B cell (primary cell): ENCODE measurements at regions of chr3 and their contacts with region 1.

Region 1: GRCh38 chr3:39166134-39166731 is 12.8 kb upstream of the CSRNP1 start:
- DNase-seq: peak; percentile 26
- ATAC-seq: peak; percentile 54
- H3K4me3 ChIP-seq: no peak overlapping the region
- H3K4me3 Mint-ChIP-seq: no peak overlapping the region
- H3K27ac ChIP-seq: no peak overlapping the region
- H3K27ac Mint-ChIP-seq: no peak overlapping the region
- H3K4me1 ChIP-seq: no peaks in the 10 kb centered on the region
- H3K4me1 Mint-ChIP-seq: no peaks in the 10 kb centered on the region
- H3K27me3 ChIP-seq: no peaks in the 10 kb centered on the region
- H3K27me3 Mint-ChIP-seq: no peaks in the 10 kb centered on the region
- CTCF ChIP-seq: no peak

Region 2: GRCh38 chr3:38627956-38628355 is 538.3 kb before region 1 on chr3:
- CTCF ChIA-PET with region 1: no interaction called
- POLR2A ChIA-PET with region 1: no interaction called
- intact Hi-C with region 1: no loop called
- DNase-seq: no peak
- ATAC-seq: no peak
- H3K4me3 ChIP-seq: no peak overlapping the region
- H3K4me3 Mint-ChIP-seq: no peak overlapping the region
- H3K27ac ChIP-seq: no peak overlapping the region
- H3K27ac Mint-ChIP-seq: no peak overlapping the region
- H3K4me1 ChIP-seq: no peaks in the 10 kb centered on the region
- H3K4me1 Mint-ChIP-seq: no peaks in the 10 kb centered on the region
- H3K27me3 ChIP-seq: no peaks in the 10 kb centered on the region
- H3K27me3 Mint-ChIP-seq: peaks cover 12% of the 10 kb centered on the region
- CTCF ChIP-seq: no peak

Region 3: GRCh38 chr3:39101022-39101689 is 65.1 kb before region 1 on chr3:
- CTCF ChIA-PET with region 1: interaction called, 3 read pairs
- POLR2A ChIA-PET with region 1: no interaction called
- intact Hi-C with region 1: loop called (anchors 5 kb)
- DNase-seq: peak; percentile 71
- ATAC-seq: peak; percentile 85
- H3K4me3 ChIP-seq: no peak overlapping the region
- H3K4me3 Mint-ChIP-seq: no peak overlapping the region
- H3K27ac ChIP-seq: peak overlapping the region in 1 of 2 donors; percentile 9
- H3K27ac Mint-ChIP-seq: peak overlapping the region; percentile 71
- H3K4me1 ChIP-seq: peaks cover 11 to 31% of the 10 kb centered on the region in 2 donors
- H3K4me1 Mint-ChIP-seq: peaks cover 46% of the 10 kb centered on the region
- H3K27me3 ChIP-seq: no peaks in the 10 kb centered on the region
- H3K27me3 Mint-ChIP-seq: no peaks in the 10 kb centered on the region
- CTCF ChIP-seq: peak; percentile 71